Activated CD4-positive, alpha-beta T cell treated with anti-CD3 and anti-CD28 coated beads, Interleukin-2, amount 10 ng/mL, durations not matched to agents 24 days and 14 days (primary cell): ENCODE measurements at regions of chr7 and their contacts with region 1.

Region 1: DNA sequence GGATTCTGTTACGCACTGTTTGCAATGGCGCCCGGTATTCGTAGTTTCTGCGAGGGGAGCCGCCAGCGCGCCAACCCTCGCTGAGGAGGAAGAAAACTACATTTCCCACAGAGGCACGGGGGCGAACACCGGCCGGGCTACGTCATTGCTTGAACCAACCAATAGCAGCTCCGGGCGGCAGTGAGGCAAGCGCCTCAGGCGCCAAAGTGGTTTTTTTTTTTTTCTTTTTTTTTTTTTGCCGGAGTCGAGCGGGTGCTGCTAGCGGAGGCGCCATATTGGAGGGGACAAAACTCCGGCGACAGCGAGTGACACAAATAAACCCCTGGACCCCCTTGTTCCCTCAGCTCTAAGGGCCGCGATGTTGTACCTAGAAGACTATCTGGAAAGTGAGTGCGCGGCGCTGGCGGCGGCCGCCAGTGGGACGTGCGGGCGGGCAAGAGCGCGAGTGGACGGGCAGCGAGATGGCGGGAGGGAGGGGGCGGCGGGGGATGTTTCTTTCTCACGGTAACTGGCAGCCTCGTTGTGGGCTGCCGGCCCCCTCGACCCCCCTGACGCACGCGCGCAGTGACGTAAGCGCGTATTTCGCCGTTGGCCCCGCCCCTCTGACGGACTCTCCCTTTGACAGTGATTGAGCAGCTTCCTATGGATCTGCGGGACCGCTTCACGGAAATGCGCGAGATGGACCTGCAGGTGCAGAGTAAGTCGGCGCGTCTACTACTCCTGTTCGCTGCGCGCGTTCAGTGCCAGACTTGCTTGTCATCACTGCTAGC is at the start of gene ING3:
- DNase-seq: peak; percentile 100
- H3K4me3 Mint-ChIP-seq: peak within 1 kb of the TSS; percentile 96
- H3K27ac Mint-ChIP-seq: peak within 1 kb of the TSS; percentile 99
- H3K4me1 Mint-ChIP-seq: peaks cover 23% of the 10 kb centered on the region
- H3K27me3 Mint-ChIP-seq: peaks cover 17% of the 10 kb centered on the region
- total RNA-seq, gene ING3: 23.5 and 24.3 TPM in 2 replicates

Region 2: GRCh38 chr7:120857588-120858573 is 92.8 kb before region 1 on chr7 and contains the start of gene TSPAN12:
- intact Hi-C with region 1: loop called (anchors 5 kb)
- DNase-seq: peak; percentile 84
- H3K4me3 Mint-ChIP-seq: peak within 1 kb of the TSS; percentile 85
- H3K27ac Mint-ChIP-seq: no peak within 1 kb of the TSS
- H3K4me1 Mint-ChIP-seq: peaks cover 13% of the 10 kb centered on the region
- H3K27me3 Mint-ChIP-seq: peaks cover 63% of the 10 kb centered on the region
- total RNA-seq, gene TSPAN12: not detected in 2 replicates

Region 3: DNA sequence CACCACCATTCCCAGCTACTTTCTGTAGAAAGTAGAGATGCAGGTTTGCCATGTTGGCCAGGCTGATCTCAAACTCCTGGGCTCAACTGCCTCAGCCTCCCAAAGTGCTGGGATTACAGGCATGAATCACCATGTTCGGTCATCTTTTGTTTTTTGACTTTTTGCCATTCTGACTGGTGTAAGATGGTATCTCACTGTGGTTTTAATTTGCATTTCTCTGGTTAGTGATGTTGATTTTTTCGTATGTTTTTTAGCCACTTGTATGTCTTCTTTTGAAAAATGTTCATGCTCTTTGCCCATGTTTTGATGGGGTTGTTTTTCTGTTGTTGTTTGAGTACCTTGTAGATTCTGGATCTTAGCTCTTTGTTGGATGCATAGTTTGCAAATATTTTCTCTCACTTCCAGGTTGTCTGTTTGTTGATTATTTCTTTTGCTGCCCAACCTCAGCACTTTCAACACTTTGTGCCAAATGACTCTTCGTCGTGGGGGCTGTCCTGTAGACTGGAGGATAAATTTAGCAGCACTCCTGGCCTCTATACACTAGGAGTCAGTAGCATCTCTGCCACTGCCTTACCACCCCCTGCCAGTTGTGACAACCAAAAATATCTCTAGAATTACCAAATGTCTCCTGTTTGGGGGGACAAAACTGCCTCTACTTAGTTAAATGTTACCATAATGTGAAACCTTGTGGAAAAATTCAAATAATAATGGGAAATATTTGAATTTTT is 31.3 kb after region 1 on chr7:
- intact Hi-C with region 1: loop called (anchors 1 kb)
- DNase-seq: peak; percentile 60
- H3K4me3 Mint-ChIP-seq: no peak overlapping the region
- H3K27ac Mint-ChIP-seq: peak overlapping the region; percentile 5
- H3K4me1 Mint-ChIP-seq: peaks cover 12% of the 10 kb centered on the region
- H3K27me3 Mint-ChIP-seq: peaks cover 10% of the 10 kb centered on the region

Region 4: DNA sequence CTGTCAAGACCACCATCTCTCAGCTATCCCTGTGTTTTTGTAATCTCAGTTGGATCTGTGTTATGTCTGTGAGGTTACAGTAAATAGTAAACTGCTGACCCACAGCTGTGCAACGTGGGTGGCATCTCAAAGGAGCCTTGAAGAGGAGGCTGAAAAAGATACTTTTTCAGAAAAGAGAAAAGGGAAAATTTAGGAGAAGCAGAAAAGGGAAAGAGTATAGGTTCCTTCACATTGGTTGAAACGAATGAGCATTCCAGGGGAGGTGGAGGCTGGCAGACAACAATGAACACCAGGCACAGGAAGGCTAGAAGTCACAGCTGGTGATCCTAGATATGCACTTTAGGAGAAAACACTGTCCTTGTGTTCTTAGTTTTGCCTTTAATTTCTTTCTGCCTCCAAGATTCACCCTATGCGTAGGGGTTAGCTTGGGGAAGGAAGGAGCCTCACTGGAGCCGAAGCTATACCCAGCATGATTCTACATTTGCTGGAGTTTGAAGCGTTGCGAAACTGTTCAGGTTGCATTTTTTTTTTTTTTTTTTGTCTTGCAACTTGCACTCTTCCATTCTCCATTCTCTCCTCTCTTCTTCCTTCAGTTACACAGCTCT is 56.1 kb after region 1 on chr7:
- intact Hi-C with region 1: no loop called
- DNase-seq: no peak
- H3K4me3 Mint-ChIP-seq: no peak overlapping the region
- H3K27ac Mint-ChIP-seq: no peak overlapping the region
- H3K4me1 Mint-ChIP-seq: no peaks in the 10 kb centered on the region
- H3K27me3 Mint-ChIP-seq: peaks cover 15% of the 10 kb centered on the region